ENCODE measurements at regions of chr17 and their contacts with region 1.

Region 1: GRCh38 chr17:28763804-28764266 is 20.0 kb downstream of the TRAF4 start:
- DNase-seq: peak; percentile 62 to 85
- H3K4me3 ChIP-seq: no peak overlapping the region
- H3K27ac ChIP-seq: no peak overlapping the region
- H3K4me1 ChIP-seq: no peaks in the 10 kb centered on the region
- H3K27me3 ChIP-seq: no peaks in the 10 kb centered on the region
- CTCF ChIP-seq: peak; percentile 80 to 90 (median 84)
- POLR2A ChIP-seq: no peak

Region 2: DNA sequence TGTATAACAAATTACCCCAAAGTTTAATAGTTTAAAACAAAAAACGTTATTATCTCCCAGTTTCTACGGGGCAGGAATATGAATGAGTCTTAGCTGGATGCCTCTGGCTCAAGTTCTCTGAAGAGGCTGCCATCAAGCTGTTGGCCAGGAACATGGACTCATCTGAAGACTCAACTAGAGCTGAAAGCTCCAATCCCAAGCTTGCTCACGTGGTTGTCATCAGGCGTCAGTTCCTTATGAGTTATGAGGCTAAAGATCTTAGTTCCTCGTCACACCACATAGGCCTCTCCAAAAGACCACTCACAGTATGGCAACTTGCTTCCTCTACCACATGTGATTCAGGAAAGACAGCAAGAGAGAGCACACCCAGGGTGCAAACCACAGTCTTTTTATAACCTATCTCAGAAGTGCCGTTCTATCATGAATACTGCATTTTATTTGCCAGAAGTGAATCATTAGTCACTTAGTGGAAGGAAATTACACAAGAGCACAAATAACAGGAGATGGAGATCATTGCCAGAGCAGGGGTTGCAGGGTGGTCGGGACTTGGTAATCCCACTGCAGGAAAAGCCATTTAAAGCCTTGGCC is 770.0 kb before region 1 on chr17:
- intact Hi-C with region 1: no loop called
- DNase-seq: no peak
- H3K4me3 ChIP-seq: no peak overlapping the region
- H3K27ac ChIP-seq: no peak overlapping the region
- H3K4me1 ChIP-seq: no peaks in the 10 kb centered on the region
- H3K27me3 ChIP-seq: no peaks in the 10 kb centered on the region
- CTCF ChIP-seq: no peak
- POLR2A ChIP-seq: no peak

Region 3: GRCh38 chr17:28661635-28662537 is 101.9 kb before region 1 on chr17 and contains the starts of genes SDF2 and SUPT6H:
- intact Hi-C with region 1: no loop called
- DNase-seq: peak; percentile 88 to 90
- H3K4me3 ChIP-seq: peak within 1 kb of the TSS; percentile 72 to 99
- H3K27ac ChIP-seq: peak within 1 kb of the TSS; percentile 96 to 98
- H3K4me1 ChIP-seq: peaks cover 0 to 12% of the 10 kb centered on the region in 2 donors
- H3K27me3 ChIP-seq: no peaks in the 10 kb centered on the region
- CTCF ChIP-seq: peak in 1 of 4 experiments; percentile 4
- POLR2A ChIP-seq: peak; percentile 67 to 89
- total RNA-seq, gene SDF2: 35.9 to 50.1 (median 43.3) TPM
- total RNA-seq, gene SUPT6H: 15.3 to 84.5 (median 47.5) TPM

Region 4: DNA sequence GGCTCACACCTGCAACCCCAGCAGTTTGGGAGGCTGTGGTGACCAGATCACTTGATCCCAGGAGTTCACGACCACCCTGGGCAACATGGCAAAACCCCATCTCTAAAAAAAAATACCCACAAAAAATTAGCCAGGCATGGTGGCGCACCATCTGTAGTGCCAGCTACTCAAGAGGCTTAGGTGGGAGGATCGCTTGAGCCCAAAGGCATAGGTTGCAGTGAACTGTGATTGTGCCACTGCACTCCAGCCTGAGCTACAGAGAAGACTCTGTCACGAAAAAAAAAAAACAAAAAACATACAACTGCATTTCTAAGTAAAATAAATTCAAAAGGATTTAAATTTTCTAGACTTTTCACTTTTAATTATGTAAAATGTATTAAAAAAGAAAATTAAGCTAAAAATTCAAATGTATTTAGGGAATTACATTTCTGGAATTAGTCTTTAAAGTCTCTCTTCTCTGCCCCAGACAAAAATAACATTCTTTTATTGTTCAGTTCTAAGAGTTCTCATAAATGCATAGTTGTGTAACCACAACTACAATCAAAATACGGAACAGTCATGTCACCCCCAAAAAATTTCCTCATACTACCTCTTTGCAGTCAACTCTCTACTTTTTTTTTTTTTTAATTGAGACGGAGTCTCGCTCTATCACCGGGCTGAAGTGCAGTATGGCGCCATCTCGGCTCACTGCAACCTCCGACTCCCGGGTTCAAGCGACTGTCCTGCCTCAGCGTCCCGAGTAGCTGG is 64.6 kb after region 1 on chr17:
- intact Hi-C with region 1: no loop called
- DNase-seq: no peak
- H3K4me3 ChIP-seq: no peak overlapping the region
- H3K27ac ChIP-seq: no peak overlapping the region
- H3K4me1 ChIP-seq: no peaks in the 10 kb centered on the region
- H3K27me3 ChIP-seq: no peaks in the 10 kb centered on the region
- CTCF ChIP-seq: no peak
- POLR2A ChIP-seq: no peak

Region 5: DNA sequence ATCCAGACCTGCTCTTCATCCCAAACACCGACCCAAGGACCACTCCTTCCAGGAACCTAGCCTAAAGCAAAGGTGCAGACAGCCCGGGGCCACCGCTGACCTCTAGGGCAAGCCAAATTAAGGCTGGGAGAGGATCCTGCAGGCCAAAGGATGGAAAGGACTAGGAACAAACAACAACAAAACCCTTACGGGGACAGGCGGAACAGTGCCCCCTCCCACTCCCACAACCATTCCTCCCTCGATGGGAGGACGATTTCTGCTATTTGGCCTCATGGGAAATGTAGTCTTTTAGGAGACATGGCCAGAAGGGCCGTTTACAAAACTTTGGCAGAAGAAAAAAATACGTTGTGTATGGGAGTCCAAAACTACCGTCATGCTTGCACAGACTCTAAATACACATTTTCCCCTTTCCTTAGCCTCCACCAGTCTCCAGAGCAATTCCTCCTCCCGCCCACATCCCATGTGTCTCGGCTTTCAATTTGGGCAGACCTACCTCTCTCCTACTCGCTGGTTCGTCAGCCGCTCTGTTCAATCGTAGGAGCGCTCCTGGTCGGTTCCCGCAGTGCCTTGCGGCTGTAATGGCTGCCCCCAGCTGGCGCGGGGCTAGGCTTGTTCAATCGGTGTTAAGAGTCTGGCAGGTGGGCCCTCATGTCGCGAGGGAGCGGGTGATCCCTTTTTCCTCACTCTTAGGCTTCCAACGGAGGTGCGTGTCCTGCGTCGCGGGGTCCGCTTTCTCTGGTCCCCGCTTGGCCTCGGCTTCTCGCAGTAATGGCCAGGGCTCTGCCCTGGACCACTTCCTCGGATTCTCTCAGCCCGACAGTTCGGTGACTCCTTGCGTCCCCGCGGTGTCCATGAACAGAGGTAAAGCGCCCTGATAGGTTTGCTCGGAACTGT is 90.9 kb after region 1 on chr17 and contains the start of gene ERAL1:
- intact Hi-C with region 1: loop called (anchors 10 kb)
- DNase-seq: peak; percentile 82 to 83
- H3K4me3 ChIP-seq: peak within 1 kb of the TSS; percentile 59 to 88
- H3K27ac ChIP-seq: peak within 1 kb of the TSS; percentile 75 to 76
- H3K4me1 ChIP-seq: no peaks in the 10 kb centered on the region
- H3K27me3 ChIP-seq: no peaks in the 10 kb centered on the region
- CTCF ChIP-seq: peak in 2 of 4 experiments; percentile 10 to 20
- POLR2A ChIP-seq: peak; percentile 1 to 54
- total RNA-seq, gene ERAL1: 19.0 to 67.6 (median 32.3) TPM

Region 6: DNA sequence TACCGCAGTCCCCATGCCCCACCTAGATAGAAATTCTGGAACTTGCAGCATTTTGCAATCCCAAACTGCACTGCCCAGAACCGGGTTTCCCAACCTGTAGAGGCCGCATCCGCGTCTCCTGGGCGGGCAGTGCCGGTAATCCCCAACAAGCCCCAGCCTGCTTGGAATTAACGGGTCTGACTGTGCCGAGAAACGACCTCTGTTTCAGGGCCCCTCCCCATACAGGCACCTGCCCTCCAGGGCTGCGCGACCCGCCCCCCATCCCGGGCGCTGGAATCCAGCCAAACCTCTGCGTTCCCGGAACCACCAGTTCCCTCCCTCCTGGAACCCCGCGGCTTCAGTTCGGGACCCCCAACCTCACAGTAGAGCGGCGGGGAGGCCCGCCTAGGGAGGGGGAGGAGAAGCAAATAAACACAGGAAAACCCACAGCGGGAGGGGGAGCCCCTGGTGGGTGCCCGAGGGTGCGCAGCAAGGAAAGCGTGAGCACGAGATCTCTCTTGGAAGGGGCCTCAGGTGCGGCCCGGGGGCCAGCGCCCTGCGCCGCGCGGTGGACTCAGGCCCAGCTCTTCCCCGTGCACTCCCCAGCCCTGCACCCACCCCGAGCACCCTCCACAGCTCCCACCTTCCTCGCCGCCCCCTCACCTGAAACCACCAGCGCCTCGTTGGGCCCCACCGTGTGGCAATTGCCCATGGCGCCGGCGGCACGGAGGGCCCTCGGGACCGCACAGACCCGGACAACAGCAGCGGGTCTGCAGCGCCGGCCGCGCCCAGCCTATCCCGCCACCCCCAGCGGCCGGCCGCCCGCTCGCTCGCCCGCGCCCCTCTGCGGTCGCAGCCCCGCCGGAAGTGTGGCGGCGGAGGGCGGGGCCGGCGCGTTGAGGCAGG is 133.3 kb after region 1 on chr17 and contains the start of gene FLOT2:
- intact Hi-C with region 1: loop called (anchors 10 kb)
- DNase-seq: peak; percentile 65 to 68
- H3K4me3 ChIP-seq: peak within 1 kb of the TSS; percentile 85 to 91
- H3K27ac ChIP-seq: peak within 1 kb of the TSS; percentile 93 to 94
- H3K4me1 ChIP-seq: peaks cover 0 to 12% of the 10 kb centered on the region in 2 donors
- H3K27me3 ChIP-seq: no peaks in the 10 kb centered on the region
- CTCF ChIP-seq: peak in 3 of 4 experiments; percentile 35 to 49 (median 39)
- POLR2A ChIP-seq: peak in 1 of 2 donors; percentile 46
- total RNA-seq, gene FLOT2: 31.3 to 117 (median 37.4) TPM